ENCODE measurements at regions of chr12 and their contacts with region 1.

Region 1: DNA sequence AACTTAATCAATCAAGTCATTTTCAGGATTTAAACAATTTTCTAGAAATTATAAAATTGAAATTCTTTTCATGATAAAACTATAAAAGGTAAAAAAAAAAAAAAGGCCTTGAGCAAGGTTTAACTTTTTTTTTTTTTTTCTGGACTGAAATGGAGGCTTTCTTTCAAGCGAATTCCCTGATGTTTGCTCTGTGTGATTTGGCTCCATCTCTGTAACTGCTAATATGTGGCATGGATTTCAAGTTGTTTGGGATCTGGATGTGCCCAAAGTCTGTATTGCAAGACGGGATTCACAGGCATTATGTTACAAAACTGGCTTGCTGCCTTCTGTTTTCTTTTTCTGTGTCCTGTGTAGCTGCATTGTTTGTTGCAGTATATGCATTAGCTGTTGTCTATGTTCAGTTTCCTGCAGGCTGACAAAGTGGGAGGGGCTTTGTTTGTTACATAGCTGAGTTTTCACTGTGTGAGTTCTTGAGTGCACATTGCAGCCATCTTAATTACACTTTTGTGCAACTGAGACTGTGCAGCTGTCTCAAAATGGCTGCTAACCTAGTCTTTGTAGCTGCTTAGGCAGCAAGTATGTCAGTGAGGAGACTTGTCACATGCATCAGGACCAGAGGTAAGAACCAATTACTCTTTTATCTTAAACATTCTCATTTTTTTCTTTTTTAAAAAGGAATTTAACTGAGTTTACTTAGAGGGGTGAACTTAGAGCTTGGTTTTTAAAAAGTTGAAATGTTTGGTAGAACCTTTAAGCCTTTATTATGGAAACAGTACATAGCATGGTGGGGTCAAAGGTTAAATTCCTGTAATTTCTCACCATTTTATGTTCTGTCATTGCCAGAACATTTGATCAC is 19.5 kb downstream of the ATF7IP start:
- DNase-seq: peak; percentile 61
- CTCF ChIP-seq: no peak

Region 2: DNA sequence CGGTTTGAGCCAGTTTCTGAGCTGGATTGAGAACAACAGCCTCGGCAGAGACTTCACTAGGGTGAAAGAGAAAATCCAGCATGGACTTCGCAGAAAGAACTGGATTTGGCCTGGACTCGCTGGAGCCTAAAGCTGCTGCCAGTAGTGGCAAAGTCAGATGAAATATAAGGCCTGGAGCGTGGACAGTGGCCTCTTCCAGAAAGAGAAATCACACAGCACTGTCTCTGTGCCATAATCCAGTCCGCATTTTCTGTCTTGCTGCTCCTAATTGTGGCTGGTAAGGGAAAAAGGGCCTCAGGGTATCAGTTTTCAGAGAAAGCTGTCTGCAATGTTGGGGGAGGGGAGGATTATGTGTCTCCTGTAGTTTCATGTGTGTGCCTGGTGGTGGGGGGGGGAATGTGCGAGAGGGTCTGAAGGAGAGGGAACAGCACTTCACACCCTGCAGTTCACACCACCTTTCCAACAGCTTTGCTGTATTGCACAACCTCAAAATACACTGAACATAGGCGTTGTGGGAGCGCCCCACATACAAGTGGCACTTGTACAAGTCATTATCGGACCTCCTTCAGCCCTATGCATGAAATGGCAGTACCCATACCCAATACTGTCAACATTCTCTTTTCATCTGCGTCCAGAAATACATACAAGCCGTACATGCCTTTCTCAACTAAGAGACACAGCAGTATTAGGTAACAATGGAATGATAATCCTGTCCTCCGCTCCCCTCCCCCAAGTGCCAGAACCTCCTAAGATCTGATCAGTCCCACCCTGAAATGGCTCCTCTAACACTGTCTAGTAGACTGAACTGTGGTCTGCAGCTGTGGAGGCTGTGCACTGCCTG is 127.1 kb before region 1 on chr12:
- CTCF ChIA-PET with region 1: no interaction called
- POLR2A ChIA-PET with region 1: interaction called, 11 read pairs
- DNase-seq: peak; percentile 43
- CTCF ChIP-seq: no peak

Region 3: DNA sequence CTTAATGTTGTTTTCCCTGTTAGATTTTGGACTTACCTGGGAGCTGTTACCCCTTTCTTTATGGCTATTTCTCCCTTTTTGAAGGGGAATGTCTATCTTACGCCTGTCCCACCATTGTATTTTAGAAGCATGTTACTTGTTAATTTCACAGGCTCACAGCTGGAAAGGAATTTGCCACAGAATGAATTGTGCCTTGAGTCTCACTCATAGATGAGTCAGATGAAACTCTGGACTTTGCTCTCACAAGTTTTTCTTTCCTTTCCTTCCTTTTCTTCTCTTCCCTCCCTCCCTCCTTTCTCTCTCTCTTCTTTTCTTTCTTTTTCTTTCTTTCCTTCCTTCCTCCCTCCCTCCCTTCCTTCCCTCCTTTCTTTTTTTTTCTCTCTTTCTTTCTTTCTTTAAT is 28.9 kb before region 1 on chr12:
- CTCF ChIA-PET with region 1: no interaction called
- POLR2A ChIA-PET with region 1: no interaction called
- DNase-seq: no peak
- CTCF ChIP-seq: no peak

Region 4: GRCh38 chr12:14373217-14373616 is 11.8 kb before region 1 on chr12:
- CTCF ChIA-PET with region 1: interaction called, 15 read pairs
- POLR2A ChIA-PET with region 1: no interaction called
- DNase-seq: no peak
- CTCF ChIP-seq: no peak

Measured in GM10248 (cell line).